ENCODE measurements at regions of chrX and their contacts with region 1.

Region 1: GRCh38 chrX:152635941-152636340 is 1.8 kb upstream of the GABRQ start:
- DNase-seq: peak; percentile 51 to 52
- H3K4me3 ChIP-seq: no peak overlapping the region
- H3K27ac ChIP-seq: no peak overlapping the region
- H3K4me1 ChIP-seq: peaks cover 0 to 5% of the 10 kb centered on the region in 2 donors
- H3K27me3 ChIP-seq: no peaks in the 10 kb centered on the region
- CTCF ChIP-seq: peak; percentile 10 to 60 (median 38)
- POLR2A ChIP-seq: no peak

Region 2: GRCh38 chrX:151745651-151746050 is 890.3 kb before region 1 on chrX:
- intact Hi-C with region 1: loop called (anchors 5 kb)
- DNase-seq: no peak
- H3K4me3 ChIP-seq: no peak overlapping the region
- H3K27ac ChIP-seq: no peak overlapping the region
- H3K4me1 ChIP-seq: no peaks in the 10 kb centered on the region
- H3K27me3 ChIP-seq: no peaks in the 10 kb centered on the region
- CTCF ChIP-seq: no peak
- POLR2A ChIP-seq: no peak

Region 3: DNA sequence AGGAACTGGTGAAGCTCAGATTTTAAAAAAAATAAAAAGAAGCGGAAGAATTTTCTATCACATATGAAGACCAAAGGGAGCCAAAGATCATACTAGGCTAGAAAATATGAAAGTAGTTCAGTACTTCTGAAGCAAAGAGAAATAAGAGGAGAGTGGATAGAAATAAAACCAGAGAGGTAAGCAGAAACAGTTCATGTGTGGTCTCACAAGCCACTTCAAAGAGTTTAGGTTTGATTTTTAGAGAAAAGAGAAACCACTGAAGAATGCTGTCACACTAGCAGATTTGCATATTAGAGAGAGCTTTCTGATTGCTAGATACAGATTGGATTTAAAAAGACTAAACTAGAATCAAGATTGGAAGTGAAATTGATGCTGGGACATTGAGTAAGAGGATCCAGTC is 236.5 kb before region 1 on chrX:
- intact Hi-C with region 1: no loop called
- DNase-seq: no peak
- H3K4me3 ChIP-seq: no peak overlapping the region
- H3K27ac ChIP-seq: no peak overlapping the region
- H3K4me1 ChIP-seq: no peaks in the 10 kb centered on the region
- H3K27me3 ChIP-seq: no peaks in the 10 kb centered on the region
- CTCF ChIP-seq: no peak
- POLR2A ChIP-seq: no peak